ENCODE measurements at regions of chr7 and their contacts with region 1.

Region 1: GRCh38 chr7:8176370-8177081 is 85.4 kb downstream of the ICA1 start:
- DNase-seq: peak; percentile 85
- ATAC-seq: peak; percentile 96
- H3K4me3 Mint-ChIP-seq: peak overlapping the region; percentile 68
- H3K27ac Mint-ChIP-seq: peak overlapping the region; percentile 99
- H3K4me1 Mint-ChIP-seq: peaks cover 50% of the 10 kb centered on the region
- H3K27me3 Mint-ChIP-seq: no peaks in the 10 kb centered on the region

Region 2: DNA sequence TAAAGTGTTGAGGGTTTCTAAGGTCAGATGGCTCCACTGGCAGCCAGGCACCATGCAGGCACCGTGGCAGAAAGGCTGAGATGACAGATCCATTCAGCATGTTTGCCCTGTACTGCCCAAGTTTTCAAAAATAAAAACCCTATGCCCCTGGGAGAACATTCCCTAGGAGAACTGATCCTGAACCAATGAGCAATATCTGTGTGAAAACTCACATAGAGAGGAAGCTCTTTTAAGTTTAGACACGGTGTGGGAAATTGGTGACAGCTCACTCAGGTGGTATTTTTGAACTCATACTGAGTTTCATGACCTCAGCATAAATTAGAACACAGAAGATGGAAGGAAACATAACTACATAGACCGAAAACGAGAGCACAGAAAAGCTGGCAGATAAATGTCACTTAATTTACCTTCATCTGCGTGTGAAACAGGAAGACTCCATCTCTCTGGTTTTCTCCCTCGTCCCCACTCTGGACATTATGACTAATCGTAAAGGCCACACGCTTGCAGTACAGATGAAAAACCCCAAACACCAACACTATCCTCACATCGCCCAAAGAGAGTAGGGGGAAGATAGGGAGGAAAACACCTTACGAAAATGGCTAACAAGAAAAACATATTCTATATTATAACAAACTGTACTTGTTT is 42.3 kb before region 1 on chr7:
- CTCF ChIA-PET with region 1: no interaction called
- POLR2A ChIA-PET with region 1: interaction called, 36 read pairs
- DNase-seq: peak; percentile 50
- ATAC-seq: peak; percentile 42
- H3K4me3 Mint-ChIP-seq: peak overlapping the region; percentile 37
- H3K27ac Mint-ChIP-seq: peak overlapping the region; percentile 84
- H3K4me1 Mint-ChIP-seq: peaks cover 53% of the 10 kb centered on the region
- H3K27me3 Mint-ChIP-seq: no peaks in the 10 kb centered on the region

Region 3: GRCh38 chr7:8197994-8198698 is 21.6 kb after region 1 on chr7:
- CTCF ChIA-PET with region 1: no interaction called
- POLR2A ChIA-PET with region 1: interaction called, 12 read pairs
- DNase-seq: peak; percentile 88
- ATAC-seq: peak; percentile 95
- H3K4me3 Mint-ChIP-seq: peak overlapping the region; percentile 0
- H3K27ac Mint-ChIP-seq: peak overlapping the region; percentile 4
- H3K4me1 Mint-ChIP-seq: peaks cover 54% of the 10 kb centered on the region
- H3K27me3 Mint-ChIP-seq: peaks cover 46% of the 10 kb centered on the region